ENCODE measurements at regions of chr2 and their contacts with region 1.

Region 1: DNA sequence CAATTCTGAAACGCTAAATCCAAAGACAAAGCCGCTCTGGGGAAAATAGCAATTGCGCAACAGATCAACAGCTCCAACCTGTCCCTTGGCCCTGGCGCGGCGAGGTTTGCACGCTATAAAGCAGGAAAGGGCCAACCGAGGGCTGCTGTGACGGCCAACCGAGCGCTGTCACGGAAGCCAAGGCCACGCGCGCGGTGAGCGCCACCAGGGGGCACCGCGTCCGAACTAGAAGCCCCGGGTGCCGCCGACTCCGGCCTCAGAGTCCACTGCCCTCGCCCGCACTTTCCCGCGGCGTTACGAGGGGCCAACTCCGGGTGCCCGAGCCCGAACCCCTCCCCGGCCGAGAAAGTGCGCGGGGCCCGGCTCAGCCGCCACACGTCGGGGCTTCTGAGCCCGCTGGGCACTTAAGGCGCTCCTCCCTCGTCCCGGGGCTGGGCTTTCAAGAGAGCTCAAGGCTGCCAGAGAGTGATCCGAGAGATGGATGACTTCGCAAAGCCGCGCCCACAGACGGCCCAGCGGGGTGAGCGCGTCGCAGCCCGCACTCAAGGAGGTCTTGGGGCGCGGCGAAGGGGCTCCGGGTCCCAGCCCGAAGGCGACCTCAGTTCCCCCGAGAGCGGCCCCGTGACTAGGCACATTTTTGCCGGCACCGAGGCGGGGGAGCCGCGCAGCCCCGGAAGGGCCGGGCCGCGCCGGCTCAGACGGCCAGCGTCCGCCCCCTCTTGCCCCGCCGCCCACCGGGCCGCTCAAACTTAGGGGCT is 897 bp downstream of the NFE2L2 start:
- DNase-seq: peak; percentile 97 to 100
- H3K4me3 ChIP-seq: peak overlapping the region; percentile 90
- H3K27ac ChIP-seq: peak overlapping the region; percentile 97
- H3K4me1 ChIP-seq: peaks cover 50% of the 10 kb centered on the region
- H3K27me3 ChIP-seq: no peaks in the 10 kb centered on the region
- CTCF ChIP-seq: peak; percentile 92

Region 2: DNA sequence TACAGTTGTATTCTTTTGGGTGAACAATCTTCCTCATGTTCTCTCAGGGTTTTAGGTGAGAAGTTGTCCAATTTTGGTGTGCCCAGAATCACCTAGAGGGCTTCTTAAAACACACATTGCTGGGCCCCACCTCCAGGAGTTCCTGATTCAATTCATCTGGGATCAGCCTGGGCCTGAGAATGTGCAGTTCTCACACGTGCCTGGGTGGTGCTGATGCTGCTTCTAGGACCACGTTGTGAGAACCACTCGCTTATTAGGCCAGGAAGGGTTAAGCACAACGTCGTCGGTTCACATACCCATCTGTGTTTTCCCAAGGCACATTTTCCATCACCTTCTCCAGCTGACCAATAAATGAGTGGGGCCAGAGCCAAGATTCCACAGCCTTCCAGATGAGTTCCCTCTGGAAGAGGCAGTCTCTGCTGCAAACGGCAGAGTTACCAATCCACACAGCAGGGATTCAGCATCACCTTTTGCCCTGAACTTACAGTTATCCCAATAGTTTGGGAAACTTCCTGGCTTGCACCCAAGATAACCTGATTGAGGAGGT is 328.7 kb before region 1 on chr2:
- CTCF ChIA-PET with region 1: no interaction called
- POLR2A ChIA-PET with region 1: no interaction called
- intact Hi-C with region 1: no loop called
- DNase-seq: no peak
- H3K4me3 ChIP-seq: no peak overlapping the region
- H3K27ac ChIP-seq: no peak overlapping the region
- H3K4me1 ChIP-seq: no peaks in the 10 kb centered on the region
- H3K27me3 ChIP-seq: peaks cover 6% of the 10 kb centered on the region; the same call in 1 of the 2 replicates
- CTCF ChIP-seq: no peak

Region 3: GRCh38 chr2:177038787-177039484 is 224.7 kb before region 1 on chr2:
- CTCF ChIA-PET with region 1: no interaction called
- POLR2A ChIA-PET with region 1: no interaction called
- intact Hi-C with region 1: no loop called
- DNase-seq: no peak
- H3K4me3 ChIP-seq: no peak overlapping the region
- H3K27ac ChIP-seq: no peak overlapping the region
- H3K4me1 ChIP-seq: no peaks in the 10 kb centered on the region
- H3K27me3 ChIP-seq: peaks cover 84% of the 10 kb centered on the region
- CTCF ChIP-seq: no peak

Region 4: GRCh38 chr2:177164584-177165052 is 99.0 kb before region 1 on chr2:
- CTCF ChIA-PET with region 1: interaction called, 35 read pairs
- POLR2A ChIA-PET with region 1: interaction called, 4 read pairs
- intact Hi-C with region 1: loop called (anchors 1 kb)
- DNase-seq: peak; percentile 75 to 87
- H3K4me3 ChIP-seq: peak overlapping the region; percentile 37; the same call in 1 of the 2 replicates
- H3K27ac ChIP-seq: peak overlapping the region; percentile 65
- H3K4me1 ChIP-seq: peaks cover 55% of the 10 kb centered on the region
- H3K27me3 ChIP-seq: no peaks in the 10 kb centered on the region
- CTCF ChIP-seq: peak; percentile 100

Region 5: DNA sequence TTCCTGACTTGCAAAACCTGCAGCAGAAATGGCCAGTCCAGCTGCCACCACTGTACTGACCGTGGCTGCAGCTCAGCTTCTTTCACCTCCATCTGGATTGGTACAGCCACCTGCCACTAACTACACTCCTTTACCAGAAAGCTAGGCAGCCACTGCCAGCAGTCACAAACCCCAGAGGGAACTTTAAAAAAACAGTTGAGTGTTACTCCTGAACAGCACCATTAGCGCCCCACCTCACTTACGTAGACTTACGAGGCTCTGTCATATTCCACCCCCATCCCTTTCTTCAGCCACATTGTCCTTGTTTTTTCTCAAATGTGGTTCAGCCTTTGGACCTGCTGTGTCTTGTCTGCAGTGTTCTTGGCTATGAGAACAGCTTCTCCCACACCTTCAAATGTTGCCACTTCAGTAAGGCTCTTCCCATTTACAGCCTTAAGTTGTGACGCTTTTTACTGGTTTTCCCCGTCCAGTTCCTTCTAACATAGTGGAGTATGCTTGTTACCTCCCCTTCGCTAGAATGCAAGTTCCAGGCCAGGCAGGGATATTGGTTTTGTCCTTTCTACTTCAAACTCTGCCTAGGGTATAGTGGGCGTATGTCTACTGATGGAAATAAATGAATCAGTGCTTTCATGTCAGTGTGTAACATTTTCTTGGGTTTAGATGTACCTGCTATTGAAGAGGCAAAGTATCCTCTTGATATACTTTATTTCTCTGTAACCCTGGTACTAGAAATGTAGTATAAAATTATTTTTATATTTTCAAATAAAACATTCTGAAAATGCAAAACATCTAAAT is 34.0 kb before region 1 on chr2:
- CTCF ChIA-PET with region 1: interaction called, 3 read pairs
- POLR2A ChIA-PET with region 1: interaction called, 8 read pairs
- intact Hi-C with region 1: loop called (anchors 5 kb)
- DNase-seq: no peak
- H3K4me3 ChIP-seq: no peak overlapping the region
- H3K27ac ChIP-seq: no peak overlapping the region
- H3K4me1 ChIP-seq: no peaks in the 10 kb centered on the region
- H3K27me3 ChIP-seq: no peaks in the 10 kb centered on the region
- CTCF ChIP-seq: no peak

Region 6: GRCh38 chr2:177296040-177296439 is 32.4 kb after region 1 on chr2:
- CTCF ChIA-PET with region 1: interaction called, 22 read pairs
- POLR2A ChIA-PET with region 1: interaction called, 5 read pairs
- intact Hi-C with region 1: loop called (anchors 1 kb)
- DNase-seq: no peak
- H3K4me3 ChIP-seq: no peak overlapping the region
- H3K27ac ChIP-seq: no peak overlapping the region
- H3K4me1 ChIP-seq: no peaks in the 10 kb centered on the region
- H3K27me3 ChIP-seq: no peaks in the 10 kb centered on the region
- CTCF ChIP-seq: peak; percentile 80

Region 7: GRCh38 chr2:177338177-177338721 is 74.6 kb after region 1 on chr2:
- CTCF ChIA-PET with region 1: interaction called, 10 read pairs
- POLR2A ChIA-PET with region 1: interaction called, 3 read pairs
- intact Hi-C with region 1: no loop called
- DNase-seq: peak; percentile 57 to 100
- H3K4me3 ChIP-seq: peak overlapping the region; percentile 23; the same call in 1 of the 2 replicates
- H3K27ac ChIP-seq: peak overlapping the region; percentile 89
- H3K4me1 ChIP-seq: peaks cover 27% of the 10 kb centered on the region
- H3K27me3 ChIP-seq: no peaks in the 10 kb centered on the region
- CTCF ChIP-seq: 0 out of 2 replicates have a peak, but pooled peaks have one; percentile 18

Region 8: GRCh38 chr2:177375640-177376039 is 112.0 kb after region 1 on chr2:
- CTCF ChIA-PET with region 1: no interaction called
- POLR2A ChIA-PET with region 1: no interaction called
- intact Hi-C with region 1: no loop called
- DNase-seq: no peak
- H3K4me3 ChIP-seq: no peak overlapping the region
- H3K27ac ChIP-seq: no peak overlapping the region
- H3K4me1 ChIP-seq: no peaks in the 10 kb centered on the region
- H3K27me3 ChIP-seq: no peaks in the 10 kb centered on the region
- CTCF ChIP-seq: no peak

Region 9: GRCh38 chr2:177552422-177553175 is 289.0 kb after region 1 on chr2:
- CTCF ChIA-PET with region 1: no interaction called
- POLR2A ChIA-PET with region 1: no interaction called
- intact Hi-C with region 1: loop called (anchors 5 kb)
- DNase-seq: peak; percentile 85 to 93
- H3K4me3 ChIP-seq: peak overlapping the region; percentile 79
- H3K27ac ChIP-seq: peak overlapping the region; percentile 61
- H3K4me1 ChIP-seq: peaks cover 4% of the 10 kb centered on the region; the same call in 1 of the 2 replicates
- H3K27me3 ChIP-seq: no peaks in the 10 kb centered on the region
- CTCF ChIP-seq: no peak